WTC11 (cell line): ENCODE measurements at regions of chr2 and their contacts with region 1.

Region 1: GRCh38 chr2:182291296-182291695 is 135.5 kb downstream of the PDE1A start:
- DNase-seq: no peak
- ATAC-seq: no peak
- H3K4me3 Mint-ChIP-seq: no peak overlapping the region
- H3K27ac Mint-ChIP-seq: no peak overlapping the region
- H3K4me1 Mint-ChIP-seq: 0 out of 2 replicates have a peak, but pooled peaks cover 3% of the 10 kb centered on the region
- H3K27me3 Mint-ChIP-seq: no peaks in the 10 kb centered on the region
- CTCF ChIP-seq: no peak

Region 2: DNA sequence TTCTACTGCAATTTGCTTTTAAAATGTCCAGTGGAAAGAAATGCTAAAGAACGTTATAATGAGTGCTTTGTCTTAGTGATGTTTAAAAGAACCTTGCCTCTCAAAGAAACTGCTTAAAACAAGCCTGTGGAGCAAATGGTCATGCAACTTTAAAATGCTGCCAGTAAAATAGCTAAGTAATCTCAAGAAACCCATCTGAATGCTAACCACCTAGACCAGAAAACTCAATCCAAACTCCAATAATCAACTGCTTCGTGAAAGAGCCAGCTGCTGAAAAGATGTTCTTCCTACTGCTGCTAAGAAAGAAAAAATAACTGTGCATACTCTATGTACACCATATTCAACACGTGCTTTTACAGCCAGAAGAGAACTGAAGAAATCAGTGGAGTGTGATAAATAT is 10.0 kb before region 1 on chr2:
- CTCF ChIA-PET with region 1: no interaction called
- POLR2A ChIA-PET with region 1: interaction called, 16 read pairs
- DNase-seq: no peak
- ATAC-seq: no peak
- H3K4me3 Mint-ChIP-seq: no peak overlapping the region
- H3K27ac Mint-ChIP-seq: no peak overlapping the region
- H3K4me1 Mint-ChIP-seq: no peaks in the 10 kb centered on the region
- H3K27me3 Mint-ChIP-seq: no peaks in the 10 kb centered on the region
- CTCF ChIP-seq: no peak